PC-3 (cell line): ENCODE measurements at regions of chr11 and their contacts with region 1.

Region 1: DNA sequence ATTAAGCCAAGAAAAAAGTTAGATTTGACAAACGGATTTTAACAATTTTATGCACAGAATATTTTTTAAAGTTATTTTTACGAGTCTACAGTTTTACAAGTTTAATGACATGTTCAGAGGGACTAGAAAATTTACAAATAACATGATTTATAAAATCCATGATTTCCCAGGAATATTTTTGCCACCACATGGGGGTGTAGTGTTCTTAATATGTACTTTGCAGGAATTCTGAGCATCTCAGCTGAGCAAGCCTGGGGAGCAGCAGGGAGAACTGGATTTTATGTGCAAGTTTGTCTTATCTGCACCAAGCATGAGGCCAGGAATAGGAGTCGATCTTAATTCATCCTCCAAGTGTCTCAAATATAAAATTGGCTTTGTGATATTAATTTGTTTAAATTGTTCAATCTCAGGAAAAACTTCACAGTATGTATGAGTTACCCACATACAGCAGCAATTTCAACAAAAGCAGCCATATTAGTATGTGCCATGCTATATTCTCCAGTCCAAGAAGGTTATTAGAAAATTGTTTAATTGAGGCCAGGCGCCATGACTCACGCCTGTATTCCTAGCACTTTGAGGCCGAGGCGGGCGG is 826.3 kb downstream of the DLG2 start:
- DNase-seq: peak; percentile 83
- ATAC-seq: peak; percentile 62
- H3K4me3 ChIP-seq: no peak overlapping the region
- H3K27ac ChIP-seq: no peak overlapping the region
- H3K4me1 ChIP-seq: peaks cover 12% of the 10 kb centered on the region
- H3K27me3 ChIP-seq: 0 out of 2 replicates have a peak, but pooled peaks cover 6% of the 10 kb centered on the region
- CTCF ChIP-seq: peak; percentile 88

Region 2: GRCh38 chr11:84819128-84819527 is 18.3 kb after region 1 on chr11:
- CTCF ChIA-PET with region 1: no interaction called
- POLR2A ChIA-PET with region 1: no interaction called
- intact Hi-C with region 1: no loop called
- DNase-seq: peak; percentile 87
- ATAC-seq: peak; percentile 44
- H3K4me3 ChIP-seq: no peak overlapping the region
- H3K27ac ChIP-seq: no peak overlapping the region
- H3K4me1 ChIP-seq: peaks cover 22% of the 10 kb centered on the region
- H3K27me3 ChIP-seq: no peaks in the 10 kb centered on the region
- CTCF ChIP-seq: no peak

Region 3: DNA sequence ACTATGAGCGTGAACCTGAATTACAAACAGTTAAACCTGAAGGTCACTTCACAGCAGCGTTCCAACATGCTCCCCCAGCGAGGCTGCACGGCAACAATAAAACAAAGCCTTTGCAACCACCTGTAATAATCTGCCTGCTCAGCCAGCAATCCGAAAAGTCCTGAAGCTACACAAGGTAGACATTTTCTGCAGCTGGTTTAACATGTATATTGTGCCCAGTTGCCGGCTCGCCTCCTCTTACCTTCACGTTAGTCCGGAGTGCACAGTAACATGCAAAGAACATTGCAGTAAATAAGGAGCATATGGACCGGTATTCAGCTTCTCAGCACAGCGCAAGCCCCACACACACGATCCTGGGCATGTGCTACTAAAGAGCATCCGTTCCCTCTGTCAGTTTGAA is 122.0 kb after region 1 on chr11:
- CTCF ChIA-PET with region 1: no interaction called
- POLR2A ChIA-PET with region 1: no interaction called
- intact Hi-C with region 1: no loop called
- DNase-seq: no peak
- ATAC-seq: peak; percentile 50
- H3K4me3 ChIP-seq: peak overlapping the region; percentile 15; the same call in 1 of the 2 replicates
- H3K27ac ChIP-seq: no peak overlapping the region
- H3K4me1 ChIP-seq: no peaks in the 10 kb centered on the region
- H3K27me3 ChIP-seq: peaks cover 41% of the 10 kb centered on the region
- CTCF ChIP-seq: no peak

Region 4: GRCh38 chr11:84969103-84969502 is 168.3 kb after region 1 on chr11:
- CTCF ChIA-PET with region 1: no interaction called
- POLR2A ChIA-PET with region 1: no interaction called
- intact Hi-C with region 1: no loop called
- DNase-seq: no peak
- ATAC-seq: no peak
- H3K4me3 ChIP-seq: no peak overlapping the region
- H3K27ac ChIP-seq: no peak overlapping the region
- H3K4me1 ChIP-seq: no peaks in the 10 kb centered on the region
- H3K27me3 ChIP-seq: peaks cover 15% of the 10 kb centered on the region; the same call in 1 of the 2 replicates
- CTCF ChIP-seq: no peak

Region 5: DNA sequence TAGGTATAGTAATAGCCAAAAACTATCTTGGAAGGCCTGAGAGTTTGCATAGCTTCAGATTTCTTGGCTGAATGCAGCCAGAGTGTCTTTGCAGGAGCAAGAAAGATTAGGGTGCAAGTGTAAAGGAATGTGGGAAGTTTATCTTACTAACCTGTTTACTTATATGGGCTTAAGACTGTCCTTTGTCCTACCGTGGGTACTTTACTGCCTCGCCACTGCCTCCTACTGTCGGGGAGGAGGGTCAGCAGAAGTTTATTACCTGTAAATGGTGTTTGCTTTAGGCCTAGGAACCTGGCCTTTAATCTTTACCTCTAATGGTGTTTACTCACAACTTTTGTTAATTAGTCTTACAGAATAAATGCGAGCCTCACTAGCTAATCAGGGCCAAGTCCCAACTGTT is 192.5 kb after region 1 on chr11:
- CTCF ChIA-PET with region 1: no interaction called
- POLR2A ChIA-PET with region 1: no interaction called
- intact Hi-C with region 1: loop called (anchors 2 kb)
- DNase-seq: peak; percentile 63
- ATAC-seq: peak; percentile 76
- H3K4me3 ChIP-seq: no peak overlapping the region
- H3K27ac ChIP-seq: no peak overlapping the region
- H3K4me1 ChIP-seq: no peaks in the 10 kb centered on the region
- H3K27me3 ChIP-seq: no peaks in the 10 kb centered on the region
- CTCF ChIP-seq: peak; percentile 88

Region 6: DNA sequence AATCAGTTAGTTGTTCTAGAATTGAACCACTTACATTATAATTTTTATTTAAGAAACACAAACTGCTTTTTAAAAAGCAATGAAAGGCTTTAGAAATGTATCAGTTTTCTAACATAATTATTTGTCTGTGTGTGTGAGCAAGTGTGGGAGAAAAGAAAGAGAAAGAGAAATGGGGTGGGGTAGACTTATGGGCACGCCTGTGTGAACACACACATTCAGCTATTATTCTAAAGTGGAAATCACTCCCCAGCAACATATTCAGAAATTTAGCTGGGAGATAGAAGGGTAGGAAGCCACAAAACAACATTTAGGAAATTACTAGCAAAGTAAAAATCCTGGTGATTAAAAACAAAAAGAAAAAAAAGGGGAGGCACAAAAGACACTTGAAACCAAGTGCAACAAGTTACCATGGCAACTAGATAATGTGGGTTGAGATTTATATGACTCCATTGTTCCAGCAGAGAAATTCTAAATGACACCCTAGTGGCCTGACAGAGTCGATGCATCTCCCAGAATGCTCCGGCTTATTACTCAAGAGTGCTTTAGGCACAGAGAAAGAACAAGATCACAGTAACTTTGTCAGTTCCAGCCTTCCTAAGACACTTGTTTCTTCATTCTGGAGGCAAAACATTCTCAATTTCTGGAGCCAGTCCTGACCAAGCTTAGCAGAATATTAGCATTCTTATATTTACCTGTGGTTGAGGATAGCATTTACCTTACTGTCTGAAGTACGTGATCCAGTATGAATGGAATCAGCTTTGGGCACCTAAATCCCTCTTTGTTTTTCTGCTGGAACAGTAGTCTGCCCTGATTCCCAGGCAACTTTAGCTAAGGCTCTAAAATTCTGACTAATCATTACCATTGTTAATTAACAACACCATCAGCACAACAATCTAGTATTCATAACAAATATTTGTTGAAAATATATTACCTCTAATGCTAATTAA is 381.9 kb after region 1 on chr11:
- CTCF ChIA-PET with region 1: no interaction called
- POLR2A ChIA-PET with region 1: no interaction called
- intact Hi-C with region 1: loop called (anchors 2 kb)
- DNase-seq: peak; percentile 75
- ATAC-seq: peak; percentile 64; the same call in 1 of the 2 replicates
- H3K4me3 ChIP-seq: no peak overlapping the region
- H3K27ac ChIP-seq: no peak overlapping the region
- H3K4me1 ChIP-seq: no peaks in the 10 kb centered on the region
- H3K27me3 ChIP-seq: no peaks in the 10 kb centered on the region
- CTCF ChIP-seq: peak; percentile 76